Activated CD4-positive, alpha-beta memory T cell treated with anti-CD3 and anti-CD28 coated beads for 36 hours (primary cell): ENCODE measurements at regions of chr3 and their contacts with region 1.

Region 1: DNA sequence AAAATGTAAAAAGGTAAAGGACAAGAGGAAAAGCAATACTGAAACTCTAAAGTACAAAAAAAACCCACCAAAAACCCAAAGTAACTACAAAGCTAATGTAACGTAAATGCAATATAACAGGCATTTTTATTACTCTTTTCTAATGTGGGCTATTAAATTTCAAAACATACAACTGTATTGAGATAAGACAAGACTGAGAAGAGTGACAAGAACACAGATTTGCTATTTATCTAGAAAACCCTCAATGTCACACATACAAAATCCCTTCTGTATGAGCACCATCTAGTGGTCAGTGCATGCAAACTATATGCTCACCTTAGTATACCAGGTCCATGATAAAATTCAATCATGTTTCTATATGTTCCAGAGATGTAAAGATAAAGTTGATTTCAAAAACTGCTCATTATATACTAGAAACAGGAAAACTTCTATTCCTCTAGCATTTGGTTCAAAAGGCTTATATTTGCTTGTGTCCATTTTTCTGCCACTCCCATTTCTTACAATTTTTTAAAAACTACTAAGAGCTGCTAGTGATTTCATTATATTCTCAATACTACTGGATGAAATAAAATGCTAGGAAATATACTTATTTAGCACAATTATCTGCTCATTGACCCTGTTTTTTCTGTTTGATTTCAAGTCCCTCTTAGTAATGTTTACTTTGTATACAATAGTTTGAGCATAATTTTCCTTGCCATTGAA is 111.4 kb downstream of the DLG1 start:
- DNase-seq: no peak
- H3K4me3 Mint-ChIP-seq: no peak overlapping the region
- H3K27ac Mint-ChIP-seq: no peak overlapping the region
- H3K4me1 Mint-ChIP-seq: peaks cover 12% of the 10 kb centered on the region
- H3K27me3 Mint-ChIP-seq: no peaks in the 10 kb centered on the region

Region 2: DNA sequence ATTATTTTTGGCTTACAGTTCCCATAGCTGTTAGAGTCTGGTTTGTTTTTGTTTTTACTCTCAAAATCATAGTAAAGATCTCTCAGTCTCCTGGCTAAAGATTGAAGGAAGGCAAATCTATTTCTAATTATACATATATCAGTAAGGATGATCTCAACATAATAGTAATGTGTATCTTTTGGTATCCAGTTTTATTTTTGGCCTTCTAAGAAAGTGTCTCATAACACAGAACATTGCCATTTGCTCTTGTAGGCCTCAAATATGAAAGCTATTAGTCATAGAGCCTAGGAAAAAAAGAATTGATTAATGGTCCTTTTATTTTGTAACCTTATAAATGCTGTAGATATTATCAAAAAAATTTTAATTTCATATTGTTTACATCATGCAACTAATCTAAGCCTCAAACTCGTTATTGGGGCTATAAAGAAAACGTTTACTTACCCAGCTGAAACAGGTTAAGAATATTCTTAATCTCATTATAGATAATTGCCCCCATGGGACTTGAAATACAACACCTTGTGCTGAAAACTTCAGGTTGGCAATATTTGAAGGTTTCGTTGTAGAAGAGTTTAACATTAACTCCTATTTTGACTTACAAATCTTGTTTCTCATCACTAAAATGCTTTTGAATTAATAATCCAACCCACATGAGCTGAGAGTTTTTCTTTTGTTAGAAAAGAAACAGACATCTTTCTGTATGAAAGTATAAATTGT is 601.8 kb before region 1 on chr3:
- CTCF ChIA-PET with region 1: no interaction called
- POLR2A ChIA-PET with region 1: no interaction called
- intact Hi-C with region 1: no loop called
- DNase-seq: no peak
- H3K4me3 Mint-ChIP-seq: no peak overlapping the region
- H3K27ac Mint-ChIP-seq: no peak overlapping the region
- H3K4me1 Mint-ChIP-seq: peaks cover 4% of the 10 kb centered on the region
- H3K27me3 Mint-ChIP-seq: no peaks in the 10 kb centered on the region

Region 3: GRCh38 chr3:196837819-196838420 is 349.1 kb before region 1 on chr3:
- CTCF ChIA-PET with region 1: interaction called, 3 read pairs
- POLR2A ChIA-PET with region 1: no interaction called
- intact Hi-C with region 1: loop called (anchors 5 kb)
- DNase-seq: peak; percentile 85
- H3K4me3 Mint-ChIP-seq: no peak overlapping the region
- H3K27ac Mint-ChIP-seq: no peak overlapping the region
- H3K4me1 Mint-ChIP-seq: no peaks in the 10 kb centered on the region
- H3K27me3 Mint-ChIP-seq: no peaks in the 10 kb centered on the region

Region 4: GRCh38 chr3:196979545-196979944 is 207.5 kb before region 1 on chr3:
- CTCF ChIA-PET with region 1: interaction called, 3 read pairs
- POLR2A ChIA-PET with region 1: no interaction called
- intact Hi-C with region 1: loop called (anchors 1 kb)
- DNase-seq: no peak
- H3K4me3 Mint-ChIP-seq: no peak overlapping the region
- H3K27ac Mint-ChIP-seq: no peak overlapping the region
- H3K4me1 Mint-ChIP-seq: peaks cover 3% of the 10 kb centered on the region
- H3K27me3 Mint-ChIP-seq: peaks cover 13% of the 10 kb centered on the region

Region 5: DNA sequence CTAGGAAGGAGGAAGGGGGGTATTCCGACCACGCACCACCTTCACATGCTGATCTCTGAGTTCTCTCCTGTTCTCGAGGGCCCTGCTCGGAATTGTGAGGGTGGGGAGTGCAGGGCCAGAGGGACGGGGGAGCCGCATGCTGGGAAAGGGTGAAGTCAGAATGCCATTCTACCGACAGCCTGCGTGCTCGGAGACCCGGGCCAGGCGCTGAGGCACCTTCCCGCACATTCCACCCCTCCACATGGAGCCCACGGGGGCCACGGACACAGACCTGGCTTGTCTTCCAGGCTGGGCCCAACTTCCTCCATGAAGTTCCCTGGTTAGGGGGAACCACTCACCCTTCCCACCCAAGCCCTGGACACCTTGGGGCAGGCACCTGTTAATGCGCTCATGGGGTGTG is 189.7 kb before region 1 on chr3:
- CTCF ChIA-PET with region 1: interaction called, 26 read pairs
- POLR2A ChIA-PET with region 1: no interaction called
- intact Hi-C with region 1: loop called (anchors 1 kb)
- DNase-seq: no peak
- H3K4me3 Mint-ChIP-seq: no peak overlapping the region
- H3K27ac Mint-ChIP-seq: no peak overlapping the region
- H3K4me1 Mint-ChIP-seq: peaks cover 3% of the 10 kb centered on the region
- H3K27me3 Mint-ChIP-seq: no peaks in the 10 kb centered on the region

Region 6: DNA sequence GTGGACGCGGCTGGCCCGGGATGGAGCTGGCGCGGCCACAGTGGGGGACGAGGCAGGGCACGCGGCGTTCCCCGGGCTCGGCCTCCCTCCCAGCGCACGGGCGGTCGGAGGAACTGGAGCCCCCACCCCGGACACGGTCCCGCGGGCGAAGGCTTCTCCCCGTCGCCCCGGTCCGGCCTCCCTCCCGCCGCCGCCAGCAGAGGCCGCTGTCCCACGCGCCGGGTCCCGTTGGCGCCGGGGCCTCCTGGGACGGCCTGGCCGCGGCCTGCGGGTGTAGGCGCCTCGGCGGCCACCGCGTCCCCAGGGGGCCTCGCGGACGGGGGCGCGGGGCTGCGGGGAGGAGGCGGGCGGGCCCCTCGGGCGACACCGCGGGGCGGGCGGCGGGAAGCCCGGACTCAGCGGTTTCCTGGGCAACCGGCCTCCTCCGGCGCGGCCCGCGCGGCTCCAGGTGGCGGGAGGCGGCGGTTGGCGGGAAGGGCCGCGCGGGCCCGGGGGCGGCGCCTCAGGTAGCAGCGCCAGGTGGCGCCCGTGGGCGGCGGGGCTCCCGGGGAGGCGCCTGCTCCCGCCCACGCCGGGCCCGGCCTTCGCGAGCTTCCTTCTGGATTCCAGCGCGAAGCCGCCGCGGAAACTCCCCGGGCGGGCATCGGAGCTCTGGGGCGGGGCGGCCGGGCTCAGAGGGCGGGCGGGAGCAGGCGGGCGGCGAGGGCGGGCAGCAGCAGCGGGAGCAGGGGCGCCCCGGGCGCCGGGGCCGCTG is 184.2 kb before region 1 on chr3:
- CTCF ChIA-PET with region 1: interaction called, 26 read pairs
- POLR2A ChIA-PET with region 1: no interaction called
- intact Hi-C with region 1: loop called (anchors 1 kb)
- DNase-seq: peak; percentile 87
- H3K4me3 Mint-ChIP-seq: no peak overlapping the region
- H3K27ac Mint-ChIP-seq: no peak overlapping the region
- H3K4me1 Mint-ChIP-seq: peaks cover 11% of the 10 kb centered on the region
- H3K27me3 Mint-ChIP-seq: no peaks in the 10 kb centered on the region